Activated CD4-positive, alpha-beta memory T cell treated with anti-CD3 and anti-CD28 coated beads for 36 hours (primary cell): ENCODE measurements at regions of chr1 and their contacts with region 1.

Region 1: DNA sequence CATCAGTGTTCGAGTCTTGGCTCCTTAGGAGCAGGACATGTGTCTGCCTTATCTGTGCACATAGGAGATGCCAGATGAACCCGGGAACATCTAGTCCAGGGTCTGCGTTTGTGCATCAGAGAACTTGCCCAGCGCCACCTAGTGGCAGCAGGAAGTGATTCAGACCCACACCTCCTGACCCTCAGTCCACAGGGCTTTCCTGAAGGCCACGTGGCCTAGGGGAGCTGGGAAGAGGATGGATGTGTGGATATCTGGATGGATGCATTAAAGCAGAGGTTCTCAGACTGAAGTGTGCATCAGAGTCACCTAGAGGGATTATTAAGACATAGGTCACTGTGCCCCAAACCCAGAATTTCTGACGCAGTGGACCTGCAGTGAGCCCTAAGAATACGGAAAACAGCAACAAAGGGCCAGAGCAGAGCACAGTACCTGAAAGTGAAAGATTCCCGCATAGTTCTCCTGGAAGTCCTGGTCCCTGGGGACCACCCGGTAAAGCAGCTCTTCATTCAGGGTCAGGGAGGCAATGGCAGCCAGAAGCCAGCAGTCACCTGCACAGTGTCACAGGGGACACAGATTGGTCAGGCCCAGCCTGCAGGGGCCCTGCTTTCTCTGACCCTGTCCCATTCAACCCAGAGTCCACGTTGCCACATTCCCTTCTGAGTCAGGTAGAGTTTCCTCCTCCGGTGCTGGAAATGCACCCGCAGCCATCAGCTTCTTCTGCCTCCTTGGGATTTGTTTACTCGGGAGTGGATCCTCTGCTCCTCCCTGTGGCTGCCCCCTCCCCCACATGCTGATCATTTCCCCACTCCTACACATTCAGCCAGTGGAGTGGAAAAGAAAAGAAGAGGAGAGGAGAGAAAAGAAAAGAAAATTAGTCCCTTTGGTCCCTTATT is 37.0 kb downstream of the CAPN8 start:
- DNase-seq: peak; percentile 60
- H3K4me3 Mint-ChIP-seq: no peak overlapping the region
- H3K27ac Mint-ChIP-seq: no peak overlapping the region
- H3K4me1 Mint-ChIP-seq: no peaks in the 10 kb centered on the region
- H3K27me3 Mint-ChIP-seq: no peaks in the 10 kb centered on the region

Region 2: DNA sequence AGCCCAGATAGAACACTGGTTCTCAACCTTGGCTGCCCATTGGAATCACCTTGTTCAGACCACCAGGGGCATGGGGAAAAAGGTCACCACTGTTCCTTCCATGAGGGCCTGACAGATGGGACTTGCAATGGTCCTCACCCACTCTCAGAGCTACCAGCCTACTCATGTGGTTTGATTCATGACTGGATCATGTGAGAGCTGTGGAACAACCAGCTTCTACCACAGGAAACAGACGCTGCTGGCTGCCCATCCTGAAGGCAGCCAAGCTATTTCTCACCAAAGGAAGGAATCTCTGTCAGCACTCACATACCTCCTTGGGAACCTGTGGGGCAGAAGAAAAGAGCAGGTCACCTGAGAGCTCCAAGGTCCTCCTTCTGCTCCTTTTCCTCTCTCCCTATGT is 16.5 kb before region 1 on chr1:
- CTCF ChIA-PET with region 1: interaction called, 10 read pairs
- POLR2A ChIA-PET with region 1: no interaction called
- intact Hi-C with region 1: no loop called
- DNase-seq: no peak
- H3K4me3 Mint-ChIP-seq: no peak overlapping the region
- H3K27ac Mint-ChIP-seq: no peak overlapping the region
- H3K4me1 Mint-ChIP-seq: no peaks in the 10 kb centered on the region
- H3K27me3 Mint-ChIP-seq: no peaks in the 10 kb centered on the region